Calu3 (cell line): ENCODE measurements at regions of chr6 and their contacts with region 1.

Region 1: DNA sequence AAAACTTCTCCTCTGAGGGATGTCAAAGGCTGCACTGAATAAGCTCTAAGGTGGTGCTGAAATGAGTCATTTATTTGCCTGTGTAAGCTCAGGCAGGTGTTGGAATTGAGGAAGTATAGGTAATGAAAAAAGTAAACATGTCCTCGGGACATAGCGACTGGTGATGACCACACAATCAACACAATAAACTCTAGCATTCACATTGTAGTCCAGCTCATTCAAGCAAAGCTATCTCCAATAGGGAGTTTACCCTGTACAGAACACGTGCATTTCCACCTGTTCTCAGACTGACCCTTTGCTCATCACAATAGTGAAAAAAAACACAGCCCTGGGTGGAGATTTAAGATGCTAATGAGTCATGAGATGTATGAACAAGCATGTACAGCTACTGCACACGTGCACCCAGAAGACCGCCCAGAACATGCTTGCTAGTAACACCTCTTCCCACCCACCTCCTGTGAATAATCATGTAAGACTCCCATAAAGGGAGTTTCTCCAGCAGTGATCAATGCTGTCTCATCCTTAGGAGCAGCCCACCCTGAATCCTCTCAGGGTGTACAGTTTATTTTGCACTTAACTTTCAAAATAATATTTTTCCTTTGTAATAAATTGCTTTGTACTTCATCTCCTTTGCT is 33.0 kb upstream of the POU5F1 start:
- DNase-seq: peak; percentile 72
- H3K4me3 Mint-ChIP-seq: peak overlapping the region; percentile 75
- H3K27ac Mint-ChIP-seq: peak overlapping the region; percentile 99
- H3K4me1 Mint-ChIP-seq: peaks cover 75% of the 10 kb centered on the region
- H3K27me3 Mint-ChIP-seq: no peaks in the 10 kb centered on the region
- CTCF ChIP-seq: no peak

Region 2: GRCh38 chr6:31139599-31139998 is 63.9 kb before region 1 on chr6:
- CTCF ChIA-PET with region 1: no interaction called
- intact Hi-C with region 1: no loop called
- DNase-seq: no peak
- H3K4me3 Mint-ChIP-seq: no peak overlapping the region
- H3K27ac Mint-ChIP-seq: no peak overlapping the region
- H3K4me1 Mint-ChIP-seq: peaks cover 29% of the 10 kb centered on the region
- H3K27me3 Mint-ChIP-seq: no peaks in the 10 kb centered on the region
- CTCF ChIP-seq: no peak

Region 3: GRCh38 chr6:31246050-31246521 is 42.6 kb after region 1 on chr6:
- CTCF ChIA-PET with region 1: interaction called, 15 read pairs
- intact Hi-C with region 1: loop called (anchors 2 kb)
- DNase-seq: peak; percentile 80
- H3K4me3 Mint-ChIP-seq: no peak overlapping the region
- H3K27ac Mint-ChIP-seq: peak overlapping the region; percentile 15
- H3K4me1 Mint-ChIP-seq: peaks cover 20% of the 10 kb centered on the region
- H3K27me3 Mint-ChIP-seq: peaks cover 17% of the 10 kb centered on the region
- CTCF ChIP-seq: no peak

Region 4: DNA sequence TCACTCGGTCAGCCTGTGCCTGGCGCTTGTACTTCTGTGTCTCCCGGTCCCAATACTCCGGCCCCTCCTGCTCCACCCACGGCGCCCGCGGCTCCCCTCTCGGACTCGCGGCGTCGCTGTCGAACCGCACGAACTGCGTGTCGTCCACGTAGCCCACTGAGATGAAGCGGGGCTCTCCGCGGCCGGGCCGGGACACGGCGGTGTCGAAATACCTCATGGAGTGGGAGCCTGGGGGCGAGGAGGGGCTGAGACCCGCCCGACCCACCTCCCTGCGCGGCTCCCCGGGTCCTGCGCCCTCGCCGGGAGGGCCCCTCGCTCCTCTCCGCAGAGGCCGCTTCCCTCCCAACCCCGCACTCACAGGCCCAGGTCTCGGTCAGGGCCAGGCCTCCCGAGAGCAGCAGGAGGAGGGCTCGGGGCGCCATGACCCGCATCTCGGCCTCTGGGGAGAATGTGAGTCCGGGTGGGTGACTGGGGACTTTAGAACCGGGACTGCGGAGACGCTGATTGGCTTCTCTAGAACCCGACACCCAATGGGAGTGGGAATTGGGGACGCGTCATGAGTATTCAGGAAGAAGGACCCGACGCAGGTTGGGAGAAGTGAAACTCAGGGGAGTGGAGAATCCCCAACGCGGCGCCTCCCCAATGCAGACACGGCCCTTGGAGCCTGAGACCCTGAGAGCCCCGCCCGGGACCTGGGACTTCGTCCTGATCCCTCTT is 68.3 kb after region 1 on chr6 and contains the start of gene HLA-C:
- CTCF ChIA-PET with region 1: interaction called, 7 read pairs
- intact Hi-C with region 1: loop called (anchors 1 kb)
- DNase-seq: peak; percentile 97
- H3K4me3 Mint-ChIP-seq: peak within 1 kb of the TSS; percentile 82
- H3K27ac Mint-ChIP-seq: peak within 1 kb of the TSS; percentile 94
- H3K4me1 Mint-ChIP-seq: peaks cover 17% of the 10 kb centered on the region
- H3K27me3 Mint-ChIP-seq: peaks cover 42% of the 10 kb centered on the region
- CTCF ChIP-seq: no peak
- total RNA-seq, gene HLA-C: 652 and 1,216 TPM in 2 replicates